Ovary (tissue), 10 donors: ENCODE measurements at regions of chr5 and their contacts with region 1.

Region 1: GRCh38 chr5:6820851-6821479 is 107.7 kb downstream of the TENT4A start:
- DNase-seq: no peak
- H3K4me3 ChIP-seq: no peak overlapping the region
- H3K27ac ChIP-seq: no peak overlapping the region
- H3K4me1 ChIP-seq: no peaks in the 10 kb centered on the region
- H3K27me3 ChIP-seq: no peaks in the 10 kb centered on the region
- CTCF ChIP-seq: peak in 1 of 3 donors; percentile 15
- EP300 ChIP-seq: no peak
- POLR2A ChIP-seq: no peak

Region 2: DNA sequence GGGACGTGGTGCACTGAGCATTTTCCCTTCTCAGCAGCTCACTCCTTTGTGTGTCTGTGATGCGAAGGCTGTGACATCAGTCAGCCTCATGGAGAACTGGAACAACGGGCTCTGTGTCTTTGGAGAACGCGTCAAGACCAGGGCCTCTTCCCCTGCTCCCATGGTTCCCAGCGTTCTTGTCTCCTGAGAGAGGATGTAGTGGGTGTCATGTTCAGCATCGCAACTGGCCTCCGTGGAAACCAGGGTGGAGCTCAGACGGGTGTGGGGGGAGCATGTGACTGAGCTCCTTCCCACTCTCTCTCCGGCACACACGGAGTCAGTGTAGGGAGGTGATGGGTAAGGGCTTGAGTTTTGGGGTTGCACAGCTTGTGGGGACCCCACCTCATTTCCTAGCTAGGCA is 48.1 kb before region 1 on chr5:
- intact Hi-C with region 1: loop called in 3 of 4 experiments (anchors 5 to 10 kb)
- DNase-seq: no peak
- H3K4me3 ChIP-seq: no peak overlapping the region
- H3K27ac ChIP-seq: no peak overlapping the region
- H3K4me1 ChIP-seq: no peaks in the 10 kb centered on the region
- H3K27me3 ChIP-seq: no peaks in the 10 kb centered on the region
- CTCF ChIP-seq: no peak
- EP300 ChIP-seq: no peak
- POLR2A ChIP-seq: no peak

Region 3: DNA sequence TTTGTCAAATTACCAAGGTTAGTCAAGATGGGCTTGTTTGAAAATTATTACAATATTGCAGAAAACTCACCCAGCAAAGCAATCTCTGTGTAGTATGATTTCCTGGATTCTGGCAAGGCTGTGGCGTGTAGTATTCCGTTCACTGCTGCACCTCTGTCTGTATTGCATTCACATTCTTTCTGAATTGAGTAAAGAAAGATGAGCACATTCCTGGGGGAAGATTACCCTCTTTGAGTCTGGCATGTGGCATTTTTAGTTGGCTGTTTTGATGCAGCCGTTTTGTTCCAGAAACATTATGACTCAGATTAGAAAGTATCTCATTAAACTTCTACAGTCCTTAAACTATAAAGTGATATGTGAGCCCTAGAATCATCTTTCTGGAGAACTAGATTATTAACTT is 90.0 kb after region 1 on chr5:
- intact Hi-C with region 1: no loop called
- DNase-seq: no peak
- H3K4me3 ChIP-seq: no peak overlapping the region
- H3K27ac ChIP-seq: no peak overlapping the region
- H3K4me1 ChIP-seq: no peaks in the 10 kb centered on the region
- H3K27me3 ChIP-seq: no peaks in the 10 kb centered on the region
- CTCF ChIP-seq: no peak
- EP300 ChIP-seq: no peak
- POLR2A ChIP-seq: no peak

Region 4: GRCh38 chr5:7886849-7887475 is 1066.0 kb after region 1 on chr5:
- intact Hi-C with region 1: no loop called
- DNase-seq: no peak
- H3K4me3 ChIP-seq: no peak overlapping the region
- H3K27ac ChIP-seq: no peak overlapping the region
- H3K4me1 ChIP-seq: no peaks in the 10 kb centered on the region
- H3K27me3 ChIP-seq: no peaks in the 10 kb centered on the region
- CTCF ChIP-seq: peak in 2 of 3 donors; percentile 48 to 52
- EP300 ChIP-seq: no peak
- POLR2A ChIP-seq: no peak